HEK293T (cell line): ENCODE measurements at regions of chrX and their contacts with region 1.

Region 1: DNA sequence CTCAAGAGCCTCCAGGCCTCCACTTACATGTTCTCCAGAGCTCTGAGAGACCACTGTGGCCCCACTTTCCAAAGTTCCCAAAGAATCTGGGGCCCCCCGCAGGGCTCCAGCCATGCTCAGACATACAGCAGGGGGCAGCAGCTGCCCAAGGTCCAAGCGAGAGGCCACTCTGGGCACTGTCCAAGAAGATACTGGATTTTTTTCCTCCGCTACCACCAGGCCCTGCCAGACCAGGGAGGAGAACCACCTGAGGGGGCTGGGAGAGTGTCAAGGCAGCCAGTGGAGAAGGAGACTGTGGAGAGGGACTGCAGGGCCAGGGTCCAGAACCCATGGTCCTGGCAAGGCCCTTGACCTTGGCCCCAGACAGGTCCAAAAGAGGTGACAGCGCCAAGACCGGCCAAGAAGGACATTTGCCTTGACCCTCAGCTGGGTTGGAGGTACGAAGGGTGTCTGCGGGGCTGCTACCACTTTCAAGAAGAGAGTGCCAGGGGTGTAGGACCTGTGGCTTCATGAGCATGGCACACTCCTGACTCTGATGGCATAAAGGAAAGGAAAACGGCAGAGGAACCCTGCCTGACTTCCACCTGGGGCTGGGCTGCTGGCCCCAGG is 5.3 kb downstream of the EMD start:
- DNase-seq: no peak

Region 2: DNA sequence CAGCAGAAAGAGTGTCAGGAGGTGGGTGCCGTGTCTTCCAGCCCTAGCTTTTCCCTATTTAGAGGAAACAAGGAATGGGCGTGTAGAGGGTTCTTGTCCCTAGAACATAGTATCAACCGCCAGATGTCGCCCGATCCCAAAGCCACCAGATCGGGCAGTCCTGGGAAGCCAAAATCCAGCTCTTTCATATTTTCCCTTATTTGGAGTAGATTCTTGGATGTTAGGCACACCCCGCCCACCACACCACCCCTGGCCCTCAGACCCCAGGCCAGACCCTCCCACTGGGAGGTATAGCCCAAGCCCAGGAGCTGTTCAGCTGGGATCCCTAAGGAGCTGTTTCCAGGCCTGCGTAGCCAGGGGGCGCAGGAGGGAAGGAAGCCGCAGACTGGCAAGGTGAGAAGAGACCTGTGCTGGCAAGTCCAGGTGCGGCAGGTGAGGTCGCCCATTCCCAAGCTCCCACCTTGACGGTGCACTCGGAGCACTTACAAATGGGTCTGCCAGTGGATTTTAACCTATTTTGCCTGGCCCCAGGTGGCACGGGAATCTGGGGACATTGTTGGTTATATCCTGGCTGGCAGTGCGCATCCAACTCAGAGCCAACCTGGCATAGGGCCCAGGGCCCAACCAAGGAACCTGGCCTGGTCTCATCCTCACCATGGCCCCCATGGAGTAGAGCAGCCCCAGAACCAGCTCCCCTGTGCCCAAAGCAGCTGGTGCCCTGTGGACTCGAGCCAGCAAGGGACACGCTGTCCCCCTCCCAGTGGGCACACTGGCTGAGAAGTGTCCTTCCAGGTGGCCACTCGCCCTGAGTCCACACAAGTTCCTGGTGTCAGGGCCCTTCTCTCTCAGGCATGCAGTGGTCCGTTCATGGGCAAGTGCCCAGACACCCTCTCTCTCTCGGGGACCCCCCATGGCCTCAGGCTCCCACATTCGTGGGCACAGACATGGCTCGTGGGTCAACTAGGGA is 10.8 kb before region 1 on chrX:
- CTCF ChIA-PET with region 1: interaction called, 20 read pairs
- POLR2A ChIA-PET with region 1: interaction called, 10 read pairs
- DNase-seq: peak; percentile 60

Region 3: GRCh38 chrX:154419732-154420364 is 35.5 kb after region 1 on chrX:
- CTCF ChIA-PET with region 1: no interaction called
- POLR2A ChIA-PET with region 1: no interaction called
- DNase-seq: no peak